ENCODE measurements at regions of chr2 and their contacts with region 1.

Region 1: DNA sequence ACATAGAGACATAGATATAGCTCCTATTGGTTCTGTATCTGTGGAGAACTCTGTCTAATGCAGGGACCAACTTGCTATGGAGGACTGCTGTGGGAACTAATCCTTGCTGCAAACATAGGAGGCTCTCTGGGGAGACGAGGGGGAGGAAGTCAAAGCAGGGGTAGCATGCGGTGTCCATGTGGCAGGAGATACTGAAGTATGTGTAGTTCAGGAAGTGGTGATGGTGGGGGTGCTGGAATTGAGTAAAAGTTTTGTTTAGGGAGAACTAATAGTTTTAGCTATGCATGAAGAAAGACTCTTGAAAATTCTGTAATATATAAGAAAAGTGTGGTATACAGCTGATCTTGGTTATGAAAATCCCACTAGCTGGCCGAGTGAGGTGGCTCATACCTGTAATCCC is 62.0 kb downstream of the ANKRD44 start:
- DNase-seq: no peak

Region 2: GRCh38 chr2:197113275-197113711 is 135.3 kb before region 1 on chr2:
- intact Hi-C with region 1: no loop called
- DNase-seq: no peak

Region 3: GRCh38 chr2:197216361-197216979 is 32.2 kb before region 1 on chr2:
- intact Hi-C with region 1: loop called in 1 of 2 experiments (anchors 1 kb)
- DNase-seq: no peak

Region 4: DNA sequence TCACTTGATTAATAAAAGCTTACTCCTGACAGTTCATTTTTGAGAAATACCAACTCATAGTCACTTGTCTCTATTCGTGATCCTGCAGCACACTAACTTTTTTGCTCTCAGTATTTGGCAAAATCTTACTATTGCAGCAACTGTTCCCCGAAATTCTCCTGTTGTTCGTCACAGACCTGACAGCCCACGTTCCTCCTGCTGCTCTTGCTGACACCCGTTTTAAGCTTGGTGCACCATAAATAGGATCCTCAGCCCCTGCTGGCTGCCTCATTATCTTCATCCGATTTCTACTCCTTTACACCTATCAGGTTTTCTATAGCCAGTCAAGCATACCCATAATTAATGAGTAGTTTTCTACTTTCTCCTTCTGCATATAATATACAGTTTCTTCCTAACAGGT is 924.6 kb after region 1 on chr2:
- intact Hi-C with region 1: no loop called
- DNase-seq: no peak